WTC11 (cell line): ENCODE measurements at regions of chr6 and their contacts with region 1.

Region 1: GRCh38 chr6:150685860-150686259 is 86.2 kb downstream of the PLEKHG1 start:
- DNase-seq: peak; percentile 87
- ATAC-seq: peak; percentile 98
- H3K4me3 Mint-ChIP-seq: no peak overlapping the region
- H3K27ac Mint-ChIP-seq: no peak overlapping the region
- H3K4me1 Mint-ChIP-seq: 0 out of 2 replicates have a peak, but pooled peaks cover 3% of the 10 kb centered on the region
- H3K27me3 Mint-ChIP-seq: no peaks in the 10 kb centered on the region
- CTCF ChIP-seq: peak; percentile 84

Region 2: DNA sequence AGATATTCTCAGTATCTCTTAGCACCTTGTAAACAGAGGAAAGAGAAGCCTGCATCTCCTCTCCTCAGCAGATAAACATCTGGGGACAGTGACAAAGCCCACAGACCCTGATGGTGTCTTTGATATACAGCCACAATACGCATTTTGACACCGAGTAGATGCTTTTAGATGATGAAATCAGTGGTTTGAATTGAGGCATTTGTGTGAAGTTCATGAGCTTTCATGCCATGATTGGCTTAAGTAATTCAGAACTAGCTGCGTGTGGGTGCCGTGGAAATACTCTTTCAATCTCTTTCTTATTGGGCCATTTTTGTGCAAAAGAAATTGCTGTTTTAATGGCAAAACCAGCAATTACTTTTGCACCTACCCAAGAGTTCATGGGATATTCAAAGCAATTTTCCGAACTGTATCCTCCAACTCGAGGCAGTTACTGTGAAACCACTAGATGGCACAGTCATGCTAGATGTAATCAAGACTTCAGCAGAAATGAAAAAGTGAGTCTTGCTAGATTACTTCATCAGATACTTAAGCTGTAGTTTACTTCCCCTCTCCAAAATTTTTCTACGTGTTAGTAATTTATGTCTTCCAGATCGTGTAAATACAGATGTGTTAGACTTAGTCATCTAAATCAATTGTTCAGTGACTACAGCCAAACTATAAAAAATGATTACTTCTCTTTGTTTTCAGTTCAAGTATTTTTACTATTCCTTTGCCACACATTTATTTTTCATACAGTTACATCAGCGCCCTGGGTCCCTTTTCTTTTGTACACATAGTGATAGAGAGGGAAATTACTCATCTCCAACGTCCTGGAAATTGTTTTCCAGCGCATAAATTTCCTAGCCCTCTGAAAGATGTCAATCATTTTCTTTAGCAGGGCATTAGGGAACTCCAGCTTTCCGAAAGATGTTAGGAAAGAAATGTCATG is 267.7 kb before region 1 on chr6:
- CTCF ChIA-PET with region 1: interaction called, 21 read pairs
- POLR2A ChIA-PET with region 1: no interaction called
- DNase-seq: no peak
- ATAC-seq: peak; percentile 67
- H3K4me3 Mint-ChIP-seq: no peak overlapping the region
- H3K27ac Mint-ChIP-seq: no peak overlapping the region
- H3K4me1 Mint-ChIP-seq: peaks cover 6% of the 10 kb centered on the region
- H3K27me3 Mint-ChIP-seq: no peaks in the 10 kb centered on the region
- CTCF ChIP-seq: no peak

Region 3: GRCh38 chr6:150557043-150557599 is 128.7 kb before region 1 on chr6:
- CTCF ChIA-PET with region 1: no interaction called
- POLR2A ChIA-PET with region 1: no interaction called
- DNase-seq: no peak
- ATAC-seq: no peak
- H3K4me3 Mint-ChIP-seq: no peak overlapping the region
- H3K27ac Mint-ChIP-seq: no peak overlapping the region
- H3K4me1 Mint-ChIP-seq: no peaks in the 10 kb centered on the region
- H3K27me3 Mint-ChIP-seq: no peaks in the 10 kb centered on the region
- CTCF ChIP-seq: no peak

Region 4: GRCh38 chr6:150600301-150601017 is 85.4 kb before region 1 on chr6:
- CTCF ChIA-PET with region 1: interaction called, 10 read pairs
- POLR2A ChIA-PET with region 1: no interaction called
- DNase-seq: peak; percentile 79
- ATAC-seq: peak; percentile 66
- H3K4me3 Mint-ChIP-seq: peak overlapping the region; percentile 89
- H3K27ac Mint-ChIP-seq: peak overlapping the region; percentile 23; the same call in 1 of the 2 replicates
- H3K4me1 Mint-ChIP-seq: peaks cover 19% of the 10 kb centered on the region
- H3K27me3 Mint-ChIP-seq: peaks cover 64% of the 10 kb centered on the region
- CTCF ChIP-seq: peak; percentile 8; the same call in 1 of the 2 replicates

Region 5: GRCh38 chr6:150641398-150642139 is 44.3 kb before region 1 on chr6:
- CTCF ChIA-PET with region 1: no interaction called
- POLR2A ChIA-PET with region 1: no interaction called
- DNase-seq: no peak
- ATAC-seq: no peak
- H3K4me3 Mint-ChIP-seq: no peak overlapping the region
- H3K27ac Mint-ChIP-seq: no peak overlapping the region
- H3K4me1 Mint-ChIP-seq: peaks cover 4% of the 10 kb centered on the region
- H3K27me3 Mint-ChIP-seq: no peaks in the 10 kb centered on the region
- CTCF ChIP-seq: no peak

Region 6: GRCh38 chr6:150697515-150697914 is 11.7 kb after region 1 on chr6:
- CTCF ChIA-PET with region 1: interaction called, 21 read pairs
- POLR2A ChIA-PET with region 1: no interaction called
- DNase-seq: no peak
- ATAC-seq: no peak; the same call in 1 of the 2 replicates
- H3K4me3 Mint-ChIP-seq: no peak overlapping the region
- H3K27ac Mint-ChIP-seq: no peak overlapping the region
- H3K4me1 Mint-ChIP-seq: peaks cover 7% of the 10 kb centered on the region
- H3K27me3 Mint-ChIP-seq: no peaks in the 10 kb centered on the region; the same call in 1 of the 2 replicates
- CTCF ChIP-seq: no peak

Region 7: DNA sequence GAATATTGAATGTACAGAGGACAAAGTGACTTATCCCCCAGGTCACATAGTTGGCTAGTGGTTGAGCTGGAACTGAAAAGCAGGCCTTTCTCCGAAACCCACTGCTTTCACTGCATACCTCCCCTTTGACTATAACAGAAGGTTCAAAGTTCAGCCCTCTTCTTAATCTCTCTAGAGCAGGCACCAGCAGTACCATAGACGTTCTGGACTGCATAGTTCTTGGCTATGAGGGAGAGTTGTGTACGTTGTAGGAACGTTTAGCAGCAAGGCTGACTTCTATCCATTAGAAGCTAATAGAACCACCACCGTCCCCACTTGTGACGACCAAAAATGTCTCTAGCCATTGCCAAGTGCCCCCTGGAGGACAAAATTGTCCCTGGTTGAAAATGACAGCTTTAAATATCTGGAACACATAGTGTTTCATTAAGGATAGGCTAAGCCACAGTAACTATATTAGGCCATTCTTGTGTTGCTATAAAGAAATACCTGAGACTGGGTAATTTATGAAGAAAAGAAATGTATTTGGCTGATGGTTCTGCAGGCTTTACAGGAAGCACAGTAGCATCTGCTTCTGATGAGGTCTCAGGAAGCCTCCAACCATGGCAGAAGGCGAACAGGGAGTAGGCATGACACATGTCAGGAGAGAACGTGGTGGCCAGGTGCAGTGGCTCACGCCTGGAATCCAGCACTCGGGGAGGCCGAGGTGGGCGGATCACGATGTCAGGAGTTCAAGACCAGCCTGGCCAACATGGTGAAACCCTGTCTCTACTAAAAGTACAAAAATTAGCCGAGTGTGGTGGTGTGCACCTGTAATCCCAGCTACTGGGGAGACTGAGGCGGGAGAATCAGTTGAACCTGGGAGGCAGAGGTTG is 56.0 kb after region 1 on chr6:
- CTCF ChIA-PET with region 1: interaction called, 31 read pairs
- POLR2A ChIA-PET with region 1: no interaction called
- DNase-seq: peak; percentile 40
- ATAC-seq: peak; percentile 41
- H3K4me3 Mint-ChIP-seq: no peak overlapping the region
- H3K27ac Mint-ChIP-seq: no peak overlapping the region
- H3K4me1 Mint-ChIP-seq: no peaks in the 10 kb centered on the region
- H3K27me3 Mint-ChIP-seq: no peaks in the 10 kb centered on the region
- CTCF ChIP-seq: peak; percentile 43; the same call in 1 of the 2 replicates

Region 8: DNA sequence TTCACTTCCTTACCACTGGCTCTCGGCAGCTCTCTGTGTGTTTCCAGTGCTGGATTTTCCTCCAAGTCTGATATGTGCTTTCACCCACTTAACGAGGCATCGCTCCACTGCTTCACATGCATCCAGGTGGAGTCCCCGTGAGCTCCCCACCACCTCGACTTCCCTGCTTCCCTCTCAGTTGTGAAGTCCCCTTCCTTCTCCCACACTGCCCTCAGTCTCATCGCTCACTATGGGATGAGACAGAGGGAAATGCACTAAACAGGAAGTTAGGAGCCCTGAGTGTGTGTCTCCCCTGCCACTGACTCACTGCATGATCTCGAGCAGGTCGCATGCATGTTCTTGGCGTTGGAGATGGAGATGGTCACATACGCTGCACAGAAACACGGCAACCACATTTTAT is 263.7 kb after region 1 on chr6:
- CTCF ChIA-PET with region 1: no interaction called
- POLR2A ChIA-PET with region 1: no interaction called
- DNase-seq: no peak
- ATAC-seq: no peak
- H3K4me3 Mint-ChIP-seq: no peak overlapping the region
- H3K27ac Mint-ChIP-seq: 0 out of 2 replicates have a peak overlapping the region, but pooled peaks have one; percentile 35
- H3K4me1 Mint-ChIP-seq: no peaks in the 10 kb centered on the region
- H3K27me3 Mint-ChIP-seq: no peaks in the 10 kb centered on the region
- CTCF ChIP-seq: no peak